Activated CD4-positive, alpha-beta T cell treated with anti-CD3 and anti-CD28 coated beads for 36 hours (primary cell): ENCODE measurements at regions of chr2 and their contacts with region 1.

Region 1: GRCh38 chr2:105369747-105370690 is 28.8 kb downstream of the FHL2 start:
- DNase-seq: peak; percentile 95
- ATAC-seq: peak; percentile 99
- H3K4me3 Mint-ChIP-seq: no peak overlapping the region
- H3K27ac Mint-ChIP-seq: no peak overlapping the region
- H3K4me1 Mint-ChIP-seq: peaks cover 10% of the 10 kb centered on the region
- H3K27me3 Mint-ChIP-seq: no peaks in the 10 kb centered on the region

Region 2: DNA sequence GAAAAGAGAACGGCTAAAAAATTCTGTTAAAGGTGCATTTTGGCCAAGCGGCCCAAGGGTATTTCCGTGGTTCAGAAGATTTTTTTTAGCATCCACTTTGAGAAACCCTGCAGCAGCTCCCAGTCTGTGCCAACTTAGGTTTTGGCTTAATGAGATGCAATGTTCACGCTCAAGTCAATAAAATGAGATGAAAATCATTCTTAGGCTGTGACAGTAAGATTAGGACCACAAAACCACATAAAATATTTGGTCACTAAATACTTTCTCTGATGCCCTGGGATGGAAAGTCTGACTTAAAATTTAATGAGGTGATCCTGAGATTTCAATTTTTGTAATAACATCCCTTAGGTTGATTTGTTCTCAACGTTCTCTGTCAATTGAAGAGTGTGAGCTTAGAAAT is 103.0 kb after region 1 on chr2:
- CTCF ChIA-PET with region 1: no interaction called
- POLR2A ChIA-PET with region 1: no interaction called
- intact Hi-C with region 1: no loop called
- DNase-seq: no peak
- ATAC-seq: no peak
- H3K4me3 Mint-ChIP-seq: no peak overlapping the region
- H3K27ac Mint-ChIP-seq: no peak overlapping the region
- H3K4me1 Mint-ChIP-seq: peaks cover 9% of the 10 kb centered on the region
- H3K27me3 Mint-ChIP-seq: peaks cover 2% of the 10 kb centered on the region

Region 3: DNA sequence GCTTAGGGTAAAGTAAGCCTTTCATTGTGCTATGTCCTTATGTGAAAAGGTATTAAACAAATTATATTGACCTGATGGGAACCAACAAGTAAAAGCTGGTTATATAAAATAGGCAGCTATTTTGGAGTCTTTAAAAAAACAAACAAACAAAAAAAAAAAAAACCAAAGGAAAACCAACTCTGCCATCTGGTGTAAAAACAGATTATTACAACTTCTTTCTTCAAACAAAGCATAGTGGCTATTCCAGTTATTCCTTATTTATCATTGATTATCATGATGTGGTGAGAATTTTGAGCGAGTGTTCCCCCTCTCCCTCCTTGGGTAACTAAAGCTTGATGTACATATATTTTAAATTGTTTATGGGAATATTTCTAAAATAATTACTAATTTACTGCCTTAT is 151.2 kb after region 1 on chr2:
- CTCF ChIA-PET with region 1: interaction called, 45 read pairs
- POLR2A ChIA-PET with region 1: no interaction called
- intact Hi-C with region 1: loop called (anchors 1 kb)
- DNase-seq: no peak
- ATAC-seq: no peak
- H3K4me3 Mint-ChIP-seq: no peak overlapping the region
- H3K27ac Mint-ChIP-seq: no peak overlapping the region
- H3K4me1 Mint-ChIP-seq: no peaks in the 10 kb centered on the region
- H3K27me3 Mint-ChIP-seq: no peaks in the 10 kb centered on the region

Region 4: GRCh38 chr2:105545730-105546627 is 176.0 kb after region 1 on chr2:
- CTCF ChIA-PET with region 1: interaction called, 7 read pairs
- POLR2A ChIA-PET with region 1: no interaction called
- intact Hi-C with region 1: loop called (anchors 1 kb)
- DNase-seq: peak; percentile 86
- ATAC-seq: peak; percentile 78
- H3K4me3 Mint-ChIP-seq: no peak overlapping the region
- H3K27ac Mint-ChIP-seq: no peak overlapping the region
- H3K4me1 Mint-ChIP-seq: peaks cover 11% of the 10 kb centered on the region
- H3K27me3 Mint-ChIP-seq: no peaks in the 10 kb centered on the region

Region 5: GRCh38 chr2:105969555-105969954 is 599.5 kb after region 1 on chr2:
- CTCF ChIA-PET with region 1: no interaction called
- POLR2A ChIA-PET with region 1: no interaction called
- intact Hi-C with region 1: loop called in 1 of 2 experiments (anchors 5 kb)
- DNase-seq: peak; percentile 56
- ATAC-seq: peak; percentile 90
- H3K4me3 Mint-ChIP-seq: no peak overlapping the region
- H3K27ac Mint-ChIP-seq: no peak overlapping the region
- H3K4me1 Mint-ChIP-seq: peaks cover 17% of the 10 kb centered on the region
- H3K27me3 Mint-ChIP-seq: no peaks in the 10 kb centered on the region